Stomach (tissue), 19 donors: ENCODE measurements at regions of chr5 and their contacts with region 1.

Region 1: GRCh38 chr5:58891096-58891970 is 308.5 kb downstream of the RAB3C start:
- DNase-seq: peak; percentile 70 to 83
- H3K4me3 ChIP-seq: peak overlapping the region in 1 of 4 donors; percentile 10
- H3K27ac ChIP-seq: peak overlapping the region in 3 of 5 donors; percentile 9 to 69 (median 25)
- H3K4me1 ChIP-seq: peaks cover 3 to 17% (median 11%) of the 10 kb centered on the region in 4 donors
- H3K27me3 ChIP-seq: no peaks in the 10 kb centered on the region
- CTCF ChIP-seq: peak in 4 of 7 experiments; percentile 61 to 86 (median 70)
- EP300 ChIP-seq: no peak
- POLR2A ChIP-seq: no peak

Region 2: GRCh38 chr5:58746321-58746720 is 145.0 kb before region 1 on chr5:
- intact Hi-C with region 1: no loop called
- DNase-seq: peak in 1 of 2 donors; percentile 21
- H3K4me3 ChIP-seq: no peak overlapping the region
- H3K27ac ChIP-seq: no peak overlapping the region
- H3K4me1 ChIP-seq: no peaks in the 10 kb centered on the region
- H3K27me3 ChIP-seq: no peaks in the 10 kb centered on the region
- CTCF ChIP-seq: no peak
- EP300 ChIP-seq: no peak
- POLR2A ChIP-seq: no peak

Region 3: DNA sequence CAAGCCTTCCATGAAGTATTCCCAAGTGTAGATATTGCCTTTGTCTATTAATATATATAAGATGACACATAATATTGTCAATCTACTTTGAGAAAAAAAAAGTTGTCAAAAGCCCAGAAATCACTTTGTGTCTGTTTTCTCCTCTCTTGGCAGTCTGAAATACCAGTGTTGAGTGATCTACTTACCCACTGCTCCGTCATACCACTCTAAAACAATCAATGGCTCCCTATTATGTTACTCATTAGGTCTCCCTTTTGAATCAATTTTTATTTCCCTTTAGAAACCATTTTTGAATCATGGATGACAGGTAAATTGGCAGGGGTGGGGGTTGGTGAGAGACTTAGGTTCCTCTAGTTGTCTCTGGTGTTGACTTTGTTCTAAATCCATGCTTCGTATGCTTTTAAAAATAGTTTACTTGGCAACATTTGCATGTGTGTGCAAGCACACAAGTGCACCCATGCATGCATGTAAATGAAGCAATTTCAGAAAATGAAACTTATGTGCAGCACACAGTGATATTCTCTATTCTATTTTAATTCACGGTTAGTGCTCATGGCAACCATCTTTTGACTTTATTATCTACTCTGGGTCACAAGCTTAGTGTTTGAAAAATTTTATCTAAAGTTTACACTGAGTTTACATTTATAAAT is 70.4 kb after region 1 on chr5:
- intact Hi-C with region 1: no loop called
- DNase-seq: no peak
- H3K4me3 ChIP-seq: no peak overlapping the region
- H3K27ac ChIP-seq: no peak overlapping the region
- H3K4me1 ChIP-seq: no peaks in the 10 kb centered on the region
- H3K27me3 ChIP-seq: no peaks in the 10 kb centered on the region
- CTCF ChIP-seq: no peak
- EP300 ChIP-seq: no peak
- POLR2A ChIP-seq: no peak

Region 4: GRCh38 chr5:59007460-59008063 is 116.2 kb after region 1 on chr5:
- intact Hi-C with region 1: loop called (anchors 5 kb)
- DNase-seq: peak in 1 of 2 donors; percentile 33
- H3K4me3 ChIP-seq: no peak overlapping the region
- H3K27ac ChIP-seq: no peak overlapping the region
- H3K4me1 ChIP-seq: peaks cover 0 to 46% (median 24%) of the 10 kb centered on the region in 4 donors
- H3K27me3 ChIP-seq: no peaks in the 10 kb centered on the region
- CTCF ChIP-seq: peak in 3 of 7 experiments; percentile 10 to 37 (median 20)
- EP300 ChIP-seq: no peak
- POLR2A ChIP-seq: no peak

Region 5: DNA sequence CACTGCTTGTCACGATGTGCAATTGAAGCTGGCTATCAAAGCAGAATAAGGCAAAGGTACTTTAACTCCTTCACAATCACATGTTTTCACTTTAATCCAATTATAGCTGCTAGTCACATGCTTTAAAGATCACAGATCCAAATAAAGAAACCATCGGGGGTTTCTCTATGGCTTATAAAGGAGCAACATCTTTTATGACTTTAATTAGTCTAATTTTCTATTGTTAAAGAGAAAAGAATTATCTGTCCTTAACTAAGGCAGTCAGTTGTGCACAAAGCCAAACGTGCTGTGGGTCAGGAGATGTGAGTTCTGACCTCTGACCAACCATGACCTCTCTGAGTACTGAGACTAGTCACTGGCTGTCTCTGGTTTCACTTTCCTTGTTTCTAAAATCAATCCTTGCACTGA is 252.6 kb after region 1 on chr5:
- intact Hi-C with region 1: no loop called
- DNase-seq: no peak
- H3K4me3 ChIP-seq: no peak overlapping the region
- H3K27ac ChIP-seq: no peak overlapping the region
- H3K4me1 ChIP-seq: peaks cover 0 to 15% (median 2%) of the 10 kb centered on the region in 4 donors
- H3K27me3 ChIP-seq: no peaks in the 10 kb centered on the region
- CTCF ChIP-seq: no peak
- EP300 ChIP-seq: no peak
- POLR2A ChIP-seq: no peak

Region 6: DNA sequence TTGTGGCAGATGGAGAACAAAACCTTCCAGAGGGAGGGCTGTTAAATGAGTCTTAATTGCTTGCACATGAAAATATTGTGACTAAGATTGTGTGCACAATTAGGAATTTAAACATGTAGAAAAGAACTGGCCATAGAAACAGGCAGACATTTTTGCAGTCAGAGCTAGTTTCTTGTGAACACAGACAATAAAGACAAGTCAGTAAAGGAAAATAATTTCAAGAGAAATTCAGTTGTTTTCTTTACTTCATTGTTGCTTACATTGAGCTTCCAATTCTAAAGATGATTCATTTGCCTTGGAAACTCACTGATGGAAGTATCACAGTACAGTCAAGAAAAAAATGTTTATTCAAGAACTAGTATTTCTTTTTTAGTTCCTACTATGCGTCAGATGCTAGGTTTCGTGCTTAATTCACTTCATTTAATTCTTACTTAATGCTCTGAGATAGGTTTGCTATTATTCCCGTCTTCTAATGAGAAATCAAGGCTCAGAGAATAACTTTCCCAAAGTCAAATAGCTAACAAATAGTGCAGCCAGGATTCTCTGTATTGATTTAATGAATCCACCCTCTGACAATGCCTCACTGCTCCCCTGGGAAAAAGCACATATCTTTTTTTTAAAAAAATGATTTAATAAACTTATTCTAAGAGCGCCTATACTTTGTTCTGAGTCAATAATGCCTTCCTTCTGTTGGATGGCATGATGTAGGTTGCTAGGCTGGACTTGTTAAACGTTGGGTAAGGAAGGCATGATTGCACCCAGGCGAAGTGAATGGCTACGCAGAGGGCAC is 272.9 kb after region 1 on chr5:
- intact Hi-C with region 1: loop called (anchors 10 kb)
- DNase-seq: no peak
- H3K4me3 ChIP-seq: no peak overlapping the region
- H3K27ac ChIP-seq: no peak overlapping the region
- H3K4me1 ChIP-seq: peaks cover 0 to 5% (median 2%) of the 10 kb centered on the region in 4 donors
- H3K27me3 ChIP-seq: no peaks in the 10 kb centered on the region
- CTCF ChIP-seq: no peak
- EP300 ChIP-seq: no peak
- POLR2A ChIP-seq: no peak

Region 7: GRCh38 chr5:59206132-59206581 is 314.8 kb after region 1 on chr5:
- intact Hi-C with region 1: no loop called
- DNase-seq: no peak
- H3K4me3 ChIP-seq: no peak overlapping the region
- H3K27ac ChIP-seq: peak overlapping the region in 2 of 5 donors; percentile 37 to 53
- H3K4me1 ChIP-seq: peaks cover 0 to 57% (median 32%) of the 10 kb centered on the region in 4 donors
- H3K27me3 ChIP-seq: no peaks in the 10 kb centered on the region
- CTCF ChIP-seq: no peak
- EP300 ChIP-seq: no peak
- POLR2A ChIP-seq: no peak